HCT116 (cell line): ENCODE measurements at regions of chr14 and their contacts with region 1.

Region 1: GRCh38 chr14:52299692-52300278 is 14.3 kb upstream of the PTGER2 start:
- DNase-seq: peak; percentile 31
- ATAC-seq: no peak; the same call in 1 of the 2 replicates
- H3K4me3 ChIP-seq: no peak overlapping the region
- H3K27ac ChIP-seq: no peak overlapping the region
- H3K4me1 ChIP-seq: no peaks in the 10 kb centered on the region
- H3K27me3 ChIP-seq: no peaks in the 10 kb centered on the region
- CTCF ChIP-seq: peak; percentile 56 to 65 (median 65); a peak in 5 of 6 replicates
- POLR2A ChIP-seq: no peak
- RAD21 ChIP-seq: peak; percentile 71

Region 2: GRCh38 chr14:51922624-51923023 is 377.2 kb before region 1 on chr14:
- CTCF ChIA-PET with region 1: no interaction called
- POLR2A ChIA-PET with region 1: no interaction called
- RAD21 ChIA-PET with region 1: no interaction called
- intact Hi-C with region 1: no loop called
- DNase-seq: no peak
- ATAC-seq: no peak
- H3K4me3 ChIP-seq: no peak overlapping the region
- H3K27ac ChIP-seq: no peak overlapping the region
- H3K4me1 ChIP-seq: no peaks in the 10 kb centered on the region
- H3K27me3 ChIP-seq: no peaks in the 10 kb centered on the region
- CTCF ChIP-seq: no peak
- POLR2A ChIP-seq: no peak
- RAD21 ChIP-seq: no peak

Region 3: GRCh38 chr14:52338051-52338681 is 38.4 kb after region 1 on chr14:
- CTCF ChIA-PET with region 1: no interaction called
- POLR2A ChIA-PET with region 1: no interaction called
- RAD21 ChIA-PET with region 1: no interaction called
- intact Hi-C with region 1: no loop called
- DNase-seq: no peak
- ATAC-seq: no peak
- H3K4me3 ChIP-seq: no peak overlapping the region
- H3K27ac ChIP-seq: no peak overlapping the region
- H3K4me1 ChIP-seq: peaks cover 6 to 11% of the 10 kb centered on the region in 2 experiments
- H3K27me3 ChIP-seq: no peaks in the 10 kb centered on the region
- CTCF ChIP-seq: no peak
- POLR2A ChIP-seq: no peak
- RAD21 ChIP-seq: no peak

Region 4: GRCh38 chr14:52473557-52473956 is 173.8 kb after region 1 on chr14:
- CTCF ChIA-PET with region 1: interaction called, 5 read pairs
- POLR2A ChIA-PET with region 1: no interaction called
- RAD21 ChIA-PET with region 1: no interaction called
- intact Hi-C with region 1: loop called (anchors 1 kb)
- DNase-seq: peak; percentile 28
- ATAC-seq: no peak
- H3K4me3 ChIP-seq: no peak overlapping the region
- H3K27ac ChIP-seq: no peak overlapping the region
- H3K4me1 ChIP-seq: no peaks in the 10 kb centered on the region
- H3K27me3 ChIP-seq: no peaks in the 10 kb centered on the region
- CTCF ChIP-seq: peak; percentile 13 to 50 (median 35); a peak in 4 of 6 replicates
- POLR2A ChIP-seq: no peak
- RAD21 ChIP-seq: peak; percentile 57

Region 5: DNA sequence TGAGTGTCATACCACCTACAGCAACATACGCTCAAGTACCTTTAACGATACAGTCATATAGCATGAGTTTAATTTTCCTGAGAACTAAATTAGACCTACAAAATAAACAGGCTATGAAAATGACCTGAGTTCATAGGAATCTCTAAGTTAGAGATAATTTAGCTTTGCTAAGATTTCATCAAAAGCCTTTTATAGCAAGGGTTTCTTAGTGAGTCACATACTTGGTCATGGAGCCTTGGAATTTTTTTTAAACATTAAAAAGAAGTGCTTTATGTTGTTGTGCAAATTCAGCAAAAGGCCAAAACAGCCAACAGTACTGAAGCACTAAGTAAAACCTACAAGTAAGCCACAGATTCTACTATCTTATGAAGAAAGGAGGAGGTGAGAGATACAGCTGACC is 744.7 kb after region 1 on chr14:
- CTCF ChIA-PET with region 1: no interaction called
- POLR2A ChIA-PET with region 1: no interaction called
- RAD21 ChIA-PET with region 1: no interaction called
- intact Hi-C with region 1: loop called (anchors 10 kb)
- DNase-seq: no peak
- ATAC-seq: no peak
- H3K4me3 ChIP-seq: no peak overlapping the region
- H3K27ac ChIP-seq: no peak overlapping the region
- H3K4me1 ChIP-seq: no peaks in the 10 kb centered on the region
- H3K27me3 ChIP-seq: no peaks in the 10 kb centered on the region
- CTCF ChIP-seq: no peak
- POLR2A ChIP-seq: no peak
- RAD21 ChIP-seq: no peak